Esophagus muscularis mucosa (tissue), 4 donors: ENCODE measurements at regions of chr12 and their contacts with region 1.

Region 1: GRCh38 chr12:71415336-71416231 is 24.0 kb upstream of the LGR5 start:
- DNase-seq: no peak
- H3K4me3 ChIP-seq: no peak overlapping the region
- H3K27ac ChIP-seq: no peak overlapping the region
- H3K4me1 ChIP-seq: no peaks in the 10 kb centered on the region
- H3K27me3 ChIP-seq: no peaks in the 10 kb centered on the region
- CTCF ChIP-seq: peak; percentile 26 to 62 (median 42)
- EP300 ChIP-seq: no peak
- POLR2A ChIP-seq: no peak

Region 2: GRCh38 chr12:71636704-71637115 is 221.1 kb after region 1 on chr12:
- intact Hi-C with region 1: loop called (anchors 5 kb)
- DNase-seq: no peak
- H3K4me3 ChIP-seq: no peak overlapping the region
- H3K27ac ChIP-seq: no peak overlapping the region
- H3K4me1 ChIP-seq: no peaks in the 10 kb centered on the region
- H3K27me3 ChIP-seq: no peaks in the 10 kb centered on the region
- CTCF ChIP-seq: peak; percentile 34 to 74 (median 51)
- EP300 ChIP-seq: no peak
- POLR2A ChIP-seq: no peak

Region 3: GRCh38 chr12:71744522-71745300 is 329.1 kb after region 1 on chr12:
- intact Hi-C with region 1: loop called (anchors 5 kb)
- DNase-seq: no peak
- H3K4me3 ChIP-seq: no peak overlapping the region
- H3K27ac ChIP-seq: no peak overlapping the region
- H3K4me1 ChIP-seq: no peaks in the 10 kb centered on the region
- H3K27me3 ChIP-seq: no peaks in the 10 kb centered on the region
- CTCF ChIP-seq: no peak
- EP300 ChIP-seq: no peak
- POLR2A ChIP-seq: no peak